IMR-90 (cell line): ENCODE measurements at regions of chr11 and their contacts with region 1.

Region 1: DNA sequence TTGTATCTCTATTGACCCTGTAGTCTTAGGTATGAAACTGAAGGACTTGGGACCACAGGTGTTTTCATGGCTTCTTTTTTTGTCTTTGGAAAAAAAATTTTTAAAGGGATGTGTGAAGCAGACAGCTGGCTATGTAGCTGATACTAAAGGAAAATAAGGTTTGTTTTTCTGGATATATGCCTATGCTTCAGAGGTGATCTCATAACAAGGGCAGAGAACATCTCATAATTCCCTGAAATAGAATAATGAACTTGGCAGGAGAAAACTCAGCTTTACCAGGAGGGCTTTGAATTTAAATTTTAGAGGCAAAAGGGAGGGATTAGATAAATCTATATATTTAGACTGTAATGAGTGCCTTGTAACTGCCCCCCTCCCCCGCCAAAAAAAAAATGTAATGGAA is 714.9 kb downstream of the OPCML start:
- DNase-seq: no peak
- ATAC-seq: no peak
- H3K4me3 ChIP-seq: no peak overlapping the region
- H3K27ac ChIP-seq: no peak overlapping the region
- H3K4me1 ChIP-seq: no peaks in the 10 kb centered on the region
- H3K27me3 ChIP-seq: peaks cover 2% of the 10 kb centered on the region; the same call in 1 of the 2 replicates
- CTCF ChIP-seq: no peak
- POLR2A ChIP-seq: no peak
- RAD21 ChIP-seq: no peak

Region 2: GRCh38 chr11:132448334-132448995 is 368.9 kb before region 1 on chr11:
- CTCF ChIA-PET with region 1: no interaction called
- POLR2A ChIA-PET with region 1: no interaction called
- dilution Hi-C with region 1: no loop called
- in situ Hi-C with region 1: no loop called
- intact Hi-C with region 1: no loop called
- DNase-seq: no peak
- ATAC-seq: no peak
- H3K4me3 ChIP-seq: no peak overlapping the region
- H3K27ac ChIP-seq: no peak overlapping the region
- H3K4me1 ChIP-seq: no peaks in the 10 kb centered on the region
- H3K27me3 ChIP-seq: no peaks in the 10 kb centered on the region
- CTCF ChIP-seq: no peak
- POLR2A ChIP-seq: no peak
- RAD21 ChIP-seq: no peak

Region 3: DNA sequence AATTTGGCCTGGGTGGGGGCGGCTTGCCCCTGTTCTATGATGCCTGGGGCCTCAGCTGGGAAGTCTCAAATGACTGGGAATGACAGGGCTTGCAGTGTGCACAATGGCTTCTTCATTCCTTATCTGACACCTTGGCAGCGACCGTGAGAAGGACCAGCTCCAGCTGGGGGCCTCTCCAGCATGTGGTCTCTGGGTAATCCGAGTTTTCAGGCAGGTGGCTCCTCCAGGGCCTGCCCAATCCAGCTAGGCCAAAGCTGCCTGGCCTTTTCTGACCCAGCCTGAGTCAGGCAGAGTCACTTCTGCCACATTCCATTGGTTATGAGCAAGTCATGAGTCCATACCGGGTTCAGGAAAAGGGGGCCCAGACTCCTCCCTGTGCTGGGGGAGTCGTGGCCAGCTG is 68.9 kb after region 1 on chr11:
- CTCF ChIA-PET with region 1: no interaction called
- POLR2A ChIA-PET with region 1: no interaction called
- dilution Hi-C with region 1: no loop called
- in situ Hi-C with region 1: no loop called
- intact Hi-C with region 1: loop called (anchors 2 kb)
- DNase-seq: peak; percentile 94
- ATAC-seq: peak; percentile 95
- H3K4me3 ChIP-seq: no peak overlapping the region
- H3K27ac ChIP-seq: no peak overlapping the region; the same call in 1 of the 2 replicates
- H3K4me1 ChIP-seq: peaks cover 9% of the 10 kb centered on the region
- H3K27me3 ChIP-seq: no peaks in the 10 kb centered on the region
- CTCF ChIP-seq: no peak
- POLR2A ChIP-seq: no peak
- RAD21 ChIP-seq: no peak